Natural killer cell (primary cell): ENCODE measurements at regions of chr11 and their contacts with region 1.

Region 1: GRCh38 chr11:34585735-34586487 is 35.0 kb upstream of the EHF start:
- DNase-seq: peak in 1 of 2 donors; percentile 65
- ATAC-seq: peak in 2 of 3 donors; percentile 49 to 53
- H3K4me3 ChIP-seq: no peak overlapping the region
- H3K4me3 Mint-ChIP-seq: no peak overlapping the region
- H3K27ac ChIP-seq: no peak overlapping the region
- H3K27ac Mint-ChIP-seq: no peak overlapping the region
- H3K4me1 ChIP-seq: no peaks in the 10 kb centered on the region
- H3K4me1 Mint-ChIP-seq: peaks cover 5 to 8% of the 10 kb centered on the region in 2 donors
- H3K27me3 ChIP-seq: peaks cover 5% of the 10 kb centered on the region
- H3K27me3 Mint-ChIP-seq: peaks cover 29 to 72% of the 10 kb centered on the region in 2 donors
- CTCF ChIP-seq: peak; percentile 76

Region 2: DNA sequence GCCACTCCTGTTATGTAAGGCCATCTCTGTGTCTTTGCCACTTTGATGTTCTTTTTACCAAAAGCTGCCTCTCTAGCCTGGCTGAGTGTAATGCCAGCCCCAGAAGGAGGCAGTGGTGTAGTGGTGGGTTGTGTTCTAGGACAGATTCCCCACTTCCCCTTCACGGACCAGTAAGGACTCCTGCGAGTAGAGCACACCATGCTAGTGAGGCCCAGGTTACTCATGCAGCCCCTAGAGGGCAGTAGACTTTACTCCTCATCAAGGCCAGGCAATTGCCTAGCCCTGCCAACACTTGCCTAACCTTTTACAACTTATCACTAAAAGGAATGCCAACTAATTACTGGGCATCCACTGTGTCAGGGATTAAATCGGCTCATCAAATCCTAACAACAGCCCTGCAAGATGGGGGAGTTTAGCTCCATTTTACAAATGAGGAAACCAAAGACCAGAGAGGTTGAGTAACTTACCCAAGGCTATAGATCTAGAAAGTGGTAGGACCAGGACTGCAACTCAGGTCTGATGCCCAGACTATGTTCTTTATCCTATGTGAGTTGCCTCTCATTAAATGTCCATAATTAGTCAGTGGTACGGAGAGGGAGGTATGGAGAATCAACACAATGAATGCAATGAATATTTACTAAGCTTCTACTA is 254.9 kb after region 1 on chr11:
- intact Hi-C with region 1: loop called (anchors 1 kb)
- DNase-seq: peak in 1 of 2 donors; percentile 49
- ATAC-seq: peak; percentile 58 to 86 (median 64)
- H3K4me3 ChIP-seq: no peak overlapping the region
- H3K4me3 Mint-ChIP-seq: no peak overlapping the region
- H3K27ac ChIP-seq: no peak overlapping the region
- H3K27ac Mint-ChIP-seq: no peak overlapping the region
- H3K4me1 ChIP-seq: no peaks in the 10 kb centered on the region
- H3K4me1 Mint-ChIP-seq: no peaks in the 10 kb centered on the region
- H3K27me3 ChIP-seq: no peaks in the 10 kb centered on the region
- H3K27me3 Mint-ChIP-seq: peaks cover 13 to 43% of the 10 kb centered on the region in 2 donors
- CTCF ChIP-seq: peak; percentile 62

Region 3: DNA sequence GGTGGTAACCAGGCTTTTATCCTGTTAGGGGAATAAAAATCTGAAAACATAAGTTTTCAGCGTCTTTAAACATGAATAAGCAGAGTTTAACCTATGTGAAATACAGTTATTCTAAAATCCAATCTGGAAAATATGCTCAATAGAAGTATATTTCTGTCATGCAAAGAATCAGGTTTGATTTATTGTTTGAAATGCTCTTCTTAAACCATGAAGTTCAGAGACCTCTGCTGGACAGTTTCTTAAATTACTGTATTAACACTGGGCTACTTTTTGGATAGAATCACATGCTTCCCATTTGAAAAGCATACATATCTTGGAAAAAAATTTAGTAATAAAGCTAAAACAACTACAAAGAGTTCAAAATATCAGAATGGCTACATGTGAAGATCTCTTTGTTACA is 304.9 kb after region 1 on chr11:
- intact Hi-C with region 1: loop called (anchors 1 kb)
- DNase-seq: peak in 1 of 2 donors; percentile 50
- ATAC-seq: peak in 1 of 3 donors; percentile 32
- H3K4me3 ChIP-seq: no peak overlapping the region
- H3K4me3 Mint-ChIP-seq: no peak overlapping the region
- H3K27ac ChIP-seq: no peak overlapping the region
- H3K27ac Mint-ChIP-seq: no peak overlapping the region
- H3K4me1 ChIP-seq: no peaks in the 10 kb centered on the region
- H3K4me1 Mint-ChIP-seq: no peaks in the 10 kb centered on the region
- H3K27me3 ChIP-seq: no peaks in the 10 kb centered on the region
- H3K27me3 Mint-ChIP-seq: no peaks in the 10 kb centered on the region
- CTCF ChIP-seq: peak; percentile 36

Region 4: GRCh38 chr11:34899633-34900016 is 313.7 kb after region 1 on chr11:
- intact Hi-C with region 1: loop called (anchors 2 kb)
- DNase-seq: no peak
- ATAC-seq: no peak
- H3K4me3 ChIP-seq: no peak overlapping the region
- H3K4me3 Mint-ChIP-seq: no peak overlapping the region
- H3K27ac ChIP-seq: no peak overlapping the region
- H3K27ac Mint-ChIP-seq: no peak overlapping the region
- H3K4me1 ChIP-seq: no peaks in the 10 kb centered on the region
- H3K4me1 Mint-ChIP-seq: peaks cover 4 to 5% of the 10 kb centered on the region in 2 donors
- H3K27me3 ChIP-seq: no peaks in the 10 kb centered on the region
- H3K27me3 Mint-ChIP-seq: no peaks in the 10 kb centered on the region
- CTCF ChIP-seq: no peak

Region 5: DNA sequence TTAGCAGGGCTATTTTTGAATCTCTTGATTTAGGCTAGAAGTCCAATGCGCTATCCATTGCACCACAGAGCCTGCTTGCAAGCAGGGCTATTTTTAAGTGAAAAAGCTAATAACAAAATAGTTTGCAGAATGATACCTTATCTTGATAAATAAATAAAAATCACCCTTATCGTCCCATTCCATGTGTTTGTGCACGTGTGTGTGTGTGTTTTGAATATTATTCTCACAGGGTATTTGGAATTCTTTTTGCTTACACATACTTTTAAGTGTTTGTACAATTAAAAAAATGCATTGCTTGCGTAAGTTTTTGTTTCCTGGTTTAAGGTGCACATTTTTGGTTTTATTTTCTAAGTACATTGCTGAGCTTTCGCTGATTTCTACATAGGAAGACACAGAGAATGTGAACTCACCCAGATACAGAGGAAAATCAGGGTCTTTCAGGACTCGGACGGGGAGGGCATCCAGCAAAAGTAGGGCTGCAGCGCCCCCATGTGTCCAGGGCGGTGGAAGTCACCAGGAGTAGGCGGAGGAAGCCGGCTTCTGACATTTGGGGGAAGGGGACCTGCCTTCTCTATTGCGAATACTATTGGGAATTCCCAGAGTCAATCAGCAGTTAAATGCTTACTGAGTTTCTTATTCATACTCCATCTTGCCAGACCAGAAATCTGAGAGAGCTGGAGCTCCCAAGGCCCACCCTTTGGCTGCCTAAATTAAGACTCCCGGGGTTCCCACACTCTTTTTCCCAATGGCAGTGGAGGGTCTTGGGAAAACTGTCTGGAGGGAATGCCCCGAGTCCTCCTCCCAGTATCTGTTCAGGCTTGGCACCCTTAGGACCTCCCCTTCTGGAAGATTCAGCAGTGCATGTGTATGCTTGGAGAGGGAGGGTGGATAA is 806.3 kb after region 1 on chr11:
- intact Hi-C with region 1: loop called (anchors 1 kb)
- DNase-seq: peak; percentile 73 to 90
- ATAC-seq: peak; percentile 70 to 90 (median 84)
- H3K4me3 ChIP-seq: no peak overlapping the region
- H3K4me3 Mint-ChIP-seq: no peak overlapping the region
- H3K27ac ChIP-seq: no peak overlapping the region
- H3K27ac Mint-ChIP-seq: no peak overlapping the region
- H3K4me1 ChIP-seq: no peaks in the 10 kb centered on the region
- H3K4me1 Mint-ChIP-seq: peaks cover 5% of the 10 kb centered on the region in 2 donors
- H3K27me3 ChIP-seq: no peaks in the 10 kb centered on the region
- H3K27me3 Mint-ChIP-seq: peaks cover 14 to 16% of the 10 kb centered on the region in 2 donors
- CTCF ChIP-seq: peak; percentile 92

Region 6: GRCh38 chr11:35485656-35486322 is 899.9 kb after region 1 on chr11:
- intact Hi-C with region 1: loop called (anchors 2 kb)
- DNase-seq: peak; percentile 56 to 79
- ATAC-seq: peak; percentile 70 to 96 (median 81)
- H3K4me3 ChIP-seq: no peak overlapping the region
- H3K4me3 Mint-ChIP-seq: no peak overlapping the region
- H3K27ac ChIP-seq: no peak overlapping the region
- H3K27ac Mint-ChIP-seq: no peak overlapping the region
- H3K4me1 ChIP-seq: no peaks in the 10 kb centered on the region
- H3K4me1 Mint-ChIP-seq: no peaks in the 10 kb centered on the region
- H3K27me3 ChIP-seq: peaks cover 3% of the 10 kb centered on the region
- H3K27me3 Mint-ChIP-seq: peaks cover 18 to 41% of the 10 kb centered on the region in 2 donors
- CTCF ChIP-seq: peak; percentile 89